Naive thymus-derived CD4-positive, alpha-beta T cell (primary cell): ENCODE measurements at regions of chr12 and their contacts with region 1.

Region 1: DNA sequence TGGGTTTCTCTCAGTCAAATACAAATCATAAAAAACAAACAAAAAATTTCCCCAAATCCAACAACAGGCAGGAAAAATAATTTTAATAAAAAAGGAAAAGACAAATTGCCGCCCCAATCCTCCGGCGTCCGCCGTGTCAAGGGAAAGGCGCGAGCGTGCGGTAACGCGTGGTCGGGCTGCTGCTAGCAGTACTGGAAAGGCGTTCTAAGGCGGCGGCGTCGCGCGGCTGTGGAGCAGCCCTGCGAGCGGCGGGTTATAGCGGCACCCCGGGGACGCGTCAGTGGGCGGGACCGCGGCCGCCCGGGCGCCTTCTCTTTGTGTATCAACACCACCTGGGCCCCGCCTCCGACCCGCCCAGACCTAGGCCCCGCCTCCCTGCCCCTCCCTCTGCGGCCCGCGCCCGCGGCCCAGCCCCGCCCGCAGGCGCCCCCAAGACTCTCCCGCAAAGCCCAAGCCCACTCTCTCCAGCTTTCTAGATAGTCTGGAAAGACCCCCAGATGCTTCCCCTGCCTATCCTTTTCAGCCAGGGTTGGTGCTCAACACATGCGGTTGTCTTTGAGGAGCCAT is at the start of gene SLC38A2:
- DNase-seq: peak; percentile 95 to 98 (median 96)
- ATAC-seq: peak; percentile 96
- H3K4me3 ChIP-seq: peak within 1 kb of the TSS; percentile 87
- H3K4me3 Mint-ChIP-seq: peak within 1 kb of the TSS; percentile 79 to 99 (median 96)
- H3K27ac ChIP-seq: peak within 1 kb of the TSS; percentile 89
- H3K27ac Mint-ChIP-seq: peak within 1 kb of the TSS; percentile 91 to 100 (median 99)
- H3K4me1 ChIP-seq: peaks cover 37 to 41% of the 10 kb centered on the region in 2 donors
- H3K4me1 Mint-ChIP-seq: peaks cover 31 to 68% (median 59%) of the 10 kb centered on the region in 7 donors
- H3K27me3 ChIP-seq: no peaks in the 10 kb centered on the region
- H3K27me3 Mint-ChIP-seq: peaks cover 0 to 11% (median 0%) of the 10 kb centered on the region in 5 donors
- total RNA-seq, gene SLC38A2: 157 to 269 (median 175) TPM

Region 2: DNA sequence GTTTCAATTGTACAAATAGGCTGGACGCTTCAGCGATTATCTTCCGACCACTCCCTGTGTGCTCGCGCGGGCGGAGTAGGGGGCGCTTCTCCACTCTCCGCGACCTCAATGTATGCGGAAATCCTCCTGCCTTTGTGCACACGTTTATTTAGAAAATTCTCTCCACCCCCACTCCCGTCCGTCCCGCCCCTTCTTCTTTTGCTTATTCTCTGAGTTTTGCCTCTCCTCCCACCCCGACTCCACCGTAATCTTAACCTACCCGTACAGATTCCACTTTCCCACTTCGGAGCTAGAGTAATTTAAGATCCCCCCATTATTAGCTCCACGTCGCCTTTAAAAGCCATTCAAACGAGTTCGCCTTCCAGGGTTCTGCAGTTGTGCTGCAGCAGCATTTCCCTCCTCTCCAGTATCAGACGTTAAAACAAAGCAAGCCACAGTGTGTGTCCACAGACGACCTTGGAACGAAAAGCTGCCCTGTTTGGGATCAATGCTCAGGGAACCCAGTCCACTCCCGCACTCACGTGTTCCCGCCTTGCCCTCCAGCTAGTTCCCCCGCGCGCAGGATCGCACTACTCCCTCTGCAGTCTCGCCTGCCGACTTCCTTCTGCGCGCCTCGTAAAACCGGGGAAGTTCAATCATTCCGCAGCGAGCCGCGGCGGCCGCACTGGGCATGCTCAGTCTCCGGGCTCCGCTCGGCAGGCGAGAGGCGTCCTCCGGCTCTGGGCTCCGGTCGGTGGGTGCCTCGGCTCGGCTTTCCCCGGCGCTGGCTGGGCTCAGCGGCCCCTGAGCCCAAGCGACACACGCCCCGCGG is 1157.0 kb before region 1 on chr12 and contains the start of gene ANO6:
- CTCF ChIA-PET with region 1: no interaction called
- POLR2A ChIA-PET with region 1: no interaction called
- intact Hi-C with region 1: loop called in 1 of 2 experiments (anchors 10 kb)
- DNase-seq: peak; percentile 58 to 85 (median 71)
- ATAC-seq: peak; percentile 86
- H3K4me3 ChIP-seq: peak within 1 kb of the TSS; percentile 83
- H3K4me3 Mint-ChIP-seq: peak within 1 kb of the TSS; percentile 90 to 99 (median 97)
- H3K27ac ChIP-seq: peak within 1 kb of the TSS; percentile 69
- H3K27ac Mint-ChIP-seq: peak within 1 kb of the TSS; percentile 83 to 96 (median 95)
- H3K4me1 ChIP-seq: peaks cover 17% of the 10 kb centered on the region in 2 donors
- H3K4me1 Mint-ChIP-seq: peaks cover 26 to 70% (median 59%) of the 10 kb centered on the region in 7 donors
- H3K27me3 ChIP-seq: no peaks in the 10 kb centered on the region
- H3K27me3 Mint-ChIP-seq: no peaks in the 10 kb centered on the region
- total RNA-seq, gene ANO6: 15.1 to 29.7 (median 25.3) TPM

Region 3: DNA sequence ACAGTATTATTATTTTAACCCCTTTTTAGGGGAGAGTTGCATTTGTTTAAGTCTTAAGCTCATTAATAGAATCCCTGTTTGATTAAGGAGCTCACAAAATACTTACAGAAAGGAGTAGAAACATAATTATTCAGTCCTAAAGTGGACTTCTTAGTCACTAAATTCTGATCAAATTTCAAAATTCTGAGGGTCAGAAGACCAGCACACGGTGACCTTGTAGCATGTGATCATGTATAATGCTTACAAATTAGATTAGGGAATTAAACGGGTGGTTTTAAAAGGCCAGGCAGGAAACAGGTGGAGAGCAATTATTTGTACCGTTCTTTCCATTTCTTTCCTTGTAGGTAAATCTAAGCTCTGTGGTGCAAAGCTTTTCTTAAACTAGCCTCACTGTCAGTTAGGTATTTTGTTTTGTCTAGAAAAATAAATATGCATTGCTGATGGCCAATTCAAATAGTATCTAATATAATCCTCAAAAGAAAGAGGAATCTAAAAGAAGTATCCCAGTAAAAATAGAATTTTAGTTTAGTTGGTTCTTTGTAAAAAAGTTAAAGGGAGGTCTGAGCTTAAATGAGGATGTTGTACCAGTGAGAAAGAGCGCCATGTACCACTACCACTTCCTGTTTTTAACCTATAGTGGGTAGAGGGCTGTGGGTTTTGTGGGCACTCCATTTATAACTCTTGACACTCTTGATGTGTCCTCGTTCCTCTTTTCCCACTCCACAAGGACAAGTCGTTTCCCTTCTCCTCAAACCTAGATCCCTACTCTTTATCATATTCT is 154.9 kb before region 1 on chr12:
- CTCF ChIA-PET with region 1: no interaction called
- POLR2A ChIA-PET with region 1: interaction called, 13 read pairs
- intact Hi-C with region 1: loop called (anchors 1 to 2 kb)
- DNase-seq: peak in 8 of 9 donors; percentile 58 to 87 (median 84)
- ATAC-seq: peak; percentile 54
- H3K4me3 ChIP-seq: peak overlapping the region; percentile 41
- H3K4me3 Mint-ChIP-seq: peak overlapping the region; percentile 74 to 89 (median 81)
- H3K27ac ChIP-seq: peak overlapping the region; percentile 78
- H3K27ac Mint-ChIP-seq: peak overlapping the region; percentile 89 to 100 (median 99)
- H3K4me1 ChIP-seq: peaks cover 95% of the 10 kb centered on the region in 2 donors
- H3K4me1 Mint-ChIP-seq: peaks cover 69 to 100% (median 98%) of the 10 kb centered on the region in 7 donors
- H3K27me3 ChIP-seq: no peaks in the 10 kb centered on the region
- H3K27me3 Mint-ChIP-seq: no peaks in the 10 kb centered on the region

Region 4: DNA sequence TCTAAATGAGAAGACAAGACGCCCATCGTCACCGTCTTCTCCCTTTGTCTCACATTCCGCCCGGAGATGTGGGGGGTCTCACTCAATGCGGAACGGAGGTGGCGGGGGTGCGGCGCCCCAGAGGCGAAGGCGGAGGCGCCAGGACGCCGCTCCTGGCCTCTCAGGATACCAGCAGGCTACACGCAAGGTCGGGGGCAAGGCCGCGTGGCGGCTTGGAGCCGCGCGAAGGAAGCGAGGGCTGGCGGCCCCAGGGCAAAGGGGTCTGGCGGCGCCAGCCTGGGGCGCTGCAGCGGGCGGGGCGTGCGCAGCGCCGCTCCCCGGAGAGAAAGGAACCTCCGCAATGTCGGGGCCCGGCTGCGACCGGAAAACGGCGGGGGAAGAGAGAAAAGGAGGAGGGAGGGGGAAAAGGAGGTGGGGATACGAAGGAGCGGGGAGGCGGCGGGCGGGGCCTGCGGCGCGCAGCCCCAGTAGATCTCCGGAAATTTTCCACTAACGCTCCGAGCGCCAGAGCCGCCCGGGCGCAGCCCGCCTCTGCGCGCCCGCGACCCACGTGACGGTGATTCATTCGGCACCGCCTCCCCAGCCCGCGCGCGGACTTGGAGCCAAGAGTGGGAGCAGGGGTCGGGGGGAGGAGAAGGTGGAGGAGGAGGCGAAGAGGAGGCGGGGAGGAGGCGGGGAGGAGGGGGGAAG is 10.5 kb after region 1 on chr12:
- CTCF ChIA-PET with region 1: no interaction called
- POLR2A ChIA-PET with region 1: interaction called, 37 read pairs
- intact Hi-C with region 1: loop called (anchors 1 kb)
- DNase-seq: peak; percentile 76 to 96 (median 90)
- ATAC-seq: peak; percentile 89
- H3K4me3 ChIP-seq: peak overlapping the region; percentile 61
- H3K4me3 Mint-ChIP-seq: peak overlapping the region; percentile 82 to 95 (median 91)
- H3K27ac ChIP-seq: peak overlapping the region; percentile 94
- H3K27ac Mint-ChIP-seq: peak overlapping the region; percentile 90 to 98 (median 97)
- H3K4me1 ChIP-seq: peaks cover 5 to 25% of the 10 kb centered on the region in 2 donors
- H3K4me1 Mint-ChIP-seq: peaks cover 24 to 53% (median 47%) of the 10 kb centered on the region in 7 donors
- H3K27me3 ChIP-seq: no peaks in the 10 kb centered on the region
- H3K27me3 Mint-ChIP-seq: no peaks in the 10 kb centered on the region

Region 5: GRCh38 chr12:46517579-46517962 is 144.9 kb after region 1 on chr12:
- CTCF ChIA-PET with region 1: no interaction called
- POLR2A ChIA-PET with region 1: interaction called, 7 read pairs
- intact Hi-C with region 1: loop called in 1 of 2 experiments (anchors 2 kb)
- DNase-seq: no peak
- ATAC-seq: no peak
- H3K4me3 ChIP-seq: no peak overlapping the region
- H3K4me3 Mint-ChIP-seq: peak overlapping the region in 9 of 10 donors; percentile 35 to 82 (median 65)
- H3K27ac ChIP-seq: no peak overlapping the region
- H3K27ac Mint-ChIP-seq: peak overlapping the region; percentile 2 to 93 (median 80)
- H3K4me1 ChIP-seq: peaks cover 0 to 27% of the 10 kb centered on the region in 2 donors
- H3K4me1 Mint-ChIP-seq: peaks cover 28 to 77% (median 62%) of the 10 kb centered on the region in 7 donors
- H3K27me3 ChIP-seq: no peaks in the 10 kb centered on the region
- H3K27me3 Mint-ChIP-seq: no peaks in the 10 kb centered on the region

Region 6: DNA sequence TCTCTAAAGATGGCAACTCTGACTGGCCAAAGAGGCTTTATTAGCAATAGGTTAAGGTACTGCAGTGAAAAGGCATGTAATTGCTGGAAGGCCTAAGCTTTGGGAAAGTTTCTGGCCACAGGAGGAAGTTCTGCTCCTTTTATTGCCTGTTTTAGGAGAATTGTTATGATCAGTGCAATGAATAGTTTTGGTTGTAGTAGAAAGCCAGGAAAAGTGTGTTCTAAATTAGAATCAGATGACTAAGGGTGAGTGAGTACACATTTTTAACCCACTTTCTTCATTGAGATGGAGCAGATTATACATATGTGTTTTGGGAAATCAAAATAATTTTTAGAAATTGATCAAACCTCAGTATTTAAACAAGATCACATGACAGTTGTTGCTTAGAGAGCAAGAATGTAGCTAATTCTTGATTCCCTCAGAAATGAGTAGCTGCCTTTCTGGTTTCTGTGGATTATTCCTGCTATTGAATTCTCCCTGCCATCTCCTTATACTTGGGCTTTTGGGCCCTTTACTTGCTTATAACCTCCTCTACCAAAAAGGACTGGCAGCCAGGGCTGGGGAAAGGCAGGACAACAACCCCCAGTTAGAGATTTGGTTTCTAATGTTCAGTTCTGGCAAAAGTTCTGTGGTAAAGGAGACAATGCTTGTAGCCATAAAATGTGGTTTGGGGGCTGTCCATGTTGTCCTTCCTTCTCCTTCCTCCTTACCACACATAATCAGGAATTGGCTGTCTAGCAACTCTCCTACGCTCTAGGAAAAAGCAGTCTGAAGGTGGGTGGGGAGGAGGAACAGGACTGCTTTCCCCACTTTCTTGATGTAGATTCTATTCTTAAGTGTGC is 236.0 kb after region 1 on chr12:
- CTCF ChIA-PET with region 1: interaction called, 3 read pairs
- POLR2A ChIA-PET with region 1: interaction called, 4 read pairs
- intact Hi-C with region 1: loop called (anchors 1 to 5 kb)
- DNase-seq: no peak
- ATAC-seq: no peak
- H3K4me3 ChIP-seq: no peak overlapping the region
- H3K4me3 Mint-ChIP-seq: peak overlapping the region; percentile 66 to 86 (median 74)
- H3K27ac ChIP-seq: no peak overlapping the region
- H3K27ac Mint-ChIP-seq: peak overlapping the region; percentile 60 to 93 (median 83)
- H3K4me1 ChIP-seq: peaks cover 21 to 27% of the 10 kb centered on the region in 2 donors
- H3K4me1 Mint-ChIP-seq: peaks cover 27 to 61% (median 59%) of the 10 kb centered on the region in 7 donors
- H3K27me3 ChIP-seq: no peaks in the 10 kb centered on the region
- H3K27me3 Mint-ChIP-seq: no peaks in the 10 kb centered on the region

Region 7: GRCh38 chr12:47276621-47277309 is 904.1 kb after region 1 on chr12:
- CTCF ChIA-PET with region 1: no interaction called
- POLR2A ChIA-PET with region 1: no interaction called
- intact Hi-C with region 1: loop called in 1 of 2 experiments (anchors 1 kb)
- DNase-seq: peak; percentile 12 to 89 (median 84)
- ATAC-seq: peak; percentile 97
- H3K4me3 ChIP-seq: peak overlapping the region; percentile 31
- H3K4me3 Mint-ChIP-seq: peak overlapping the region; percentile 51 to 83 (median 74)
- H3K27ac ChIP-seq: peak overlapping the region; percentile 69
- H3K27ac Mint-ChIP-seq: peak overlapping the region; percentile 90 to 98 (median 92)
- H3K4me1 ChIP-seq: peaks cover 28 to 73% of the 10 kb centered on the region in 2 donors
- H3K4me1 Mint-ChIP-seq: peaks cover 42 to 97% (median 90%) of the 10 kb centered on the region in 7 donors
- H3K27me3 ChIP-seq: no peaks in the 10 kb centered on the region
- H3K27me3 Mint-ChIP-seq: no peaks in the 10 kb centered on the region